Posterior vena cava (tissue), 2 donors: ENCODE measurements at regions of chr6 and their contacts with region 1.

Region 1: GRCh38 chr6:160398674-160399271 is 50.6 kb downstream of the SLC22A3 start:
- DNase-seq: no peak

Region 2: DNA sequence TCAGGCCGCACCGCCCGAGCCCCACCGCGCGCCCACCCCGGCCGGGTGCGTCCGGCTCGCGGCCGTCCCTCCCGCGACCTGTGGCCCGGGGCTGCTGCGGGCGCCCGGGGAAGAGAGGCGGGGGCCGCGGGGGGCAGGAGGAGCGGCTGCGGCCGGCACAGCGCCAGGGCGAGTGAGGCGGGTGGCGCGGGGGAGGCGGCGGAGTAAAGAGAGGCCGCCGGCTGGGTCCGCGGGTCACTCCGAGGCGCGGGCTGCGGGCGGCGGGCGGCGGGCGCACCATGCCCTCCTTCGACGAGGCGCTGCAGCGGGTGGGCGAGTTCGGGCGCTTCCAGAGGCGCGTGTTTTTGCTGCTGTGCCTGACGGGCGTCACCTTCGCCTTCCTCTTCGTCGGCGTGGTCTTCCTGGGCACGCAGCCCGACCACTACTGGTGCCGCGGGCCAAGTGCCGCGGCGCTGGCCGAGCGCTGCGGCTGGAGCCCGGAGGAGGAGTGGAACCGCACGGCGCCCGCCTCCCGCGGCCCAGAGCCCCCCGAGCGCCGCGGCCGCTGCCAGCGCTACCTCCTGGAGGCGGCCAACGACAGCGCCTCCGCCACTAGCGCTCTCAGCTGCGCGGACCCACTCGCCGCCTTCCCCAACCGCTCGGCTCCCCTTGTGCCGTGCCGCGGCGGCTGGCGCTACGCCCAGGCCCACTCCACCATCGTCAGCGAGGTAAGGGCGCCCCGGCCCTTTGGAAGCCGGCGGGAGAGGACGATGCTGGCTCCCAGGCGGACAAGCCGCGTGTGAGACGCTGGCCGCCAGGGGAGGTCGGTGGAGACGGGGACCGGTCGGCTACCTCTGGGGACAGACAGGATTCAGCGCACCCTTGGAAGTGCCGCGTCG is 50.4 kb before region 1 on chr6 and contains the start of gene SLC22A3:
- intact Hi-C with region 1: loop called in 1 of 2 experiments (anchors 2 kb)
- DNase-seq: no peak
- total RNA-seq, gene SLC22A3: 24.3 to 26.6 TPM